Activated B cell treated with CpG ODN at 0.5 μM for 24 hours (primary cell): ENCODE measurements at regions of chr16 and their contacts with region 1.

Region 1: GRCh38 chr16:15618392-15618791 is 24.6 kb downstream of the MARF1 start:
- DNase-seq: no peak
- ATAC-seq: no peak
- H3K4me3 Mint-ChIP-seq: no peak overlapping the region
- H3K27ac Mint-ChIP-seq: peak overlapping the region; percentile 43
- H3K4me1 Mint-ChIP-seq: peaks cover 4% of the 10 kb centered on the region
- H3K27me3 Mint-ChIP-seq: no peaks in the 10 kb centered on the region
- CTCF ChIP-seq: no peak

Region 2: GRCh38 chr16:15553313-15554088 is 64.9 kb before region 1 on chr16:
- CTCF ChIA-PET with region 1: no interaction called
- POLR2A ChIA-PET with region 1: no interaction called
- intact Hi-C with region 1: loop called (anchors 10 kb)
- DNase-seq: no peak
- ATAC-seq: no peak
- H3K4me3 Mint-ChIP-seq: no peak overlapping the region
- H3K27ac Mint-ChIP-seq: no peak overlapping the region
- H3K4me1 Mint-ChIP-seq: no peaks in the 10 kb centered on the region
- H3K27me3 Mint-ChIP-seq: no peaks in the 10 kb centered on the region
- CTCF ChIP-seq: no peak